ENCODE measurements at regions of chr20 and their contacts with region 1.

Region 1: DNA sequence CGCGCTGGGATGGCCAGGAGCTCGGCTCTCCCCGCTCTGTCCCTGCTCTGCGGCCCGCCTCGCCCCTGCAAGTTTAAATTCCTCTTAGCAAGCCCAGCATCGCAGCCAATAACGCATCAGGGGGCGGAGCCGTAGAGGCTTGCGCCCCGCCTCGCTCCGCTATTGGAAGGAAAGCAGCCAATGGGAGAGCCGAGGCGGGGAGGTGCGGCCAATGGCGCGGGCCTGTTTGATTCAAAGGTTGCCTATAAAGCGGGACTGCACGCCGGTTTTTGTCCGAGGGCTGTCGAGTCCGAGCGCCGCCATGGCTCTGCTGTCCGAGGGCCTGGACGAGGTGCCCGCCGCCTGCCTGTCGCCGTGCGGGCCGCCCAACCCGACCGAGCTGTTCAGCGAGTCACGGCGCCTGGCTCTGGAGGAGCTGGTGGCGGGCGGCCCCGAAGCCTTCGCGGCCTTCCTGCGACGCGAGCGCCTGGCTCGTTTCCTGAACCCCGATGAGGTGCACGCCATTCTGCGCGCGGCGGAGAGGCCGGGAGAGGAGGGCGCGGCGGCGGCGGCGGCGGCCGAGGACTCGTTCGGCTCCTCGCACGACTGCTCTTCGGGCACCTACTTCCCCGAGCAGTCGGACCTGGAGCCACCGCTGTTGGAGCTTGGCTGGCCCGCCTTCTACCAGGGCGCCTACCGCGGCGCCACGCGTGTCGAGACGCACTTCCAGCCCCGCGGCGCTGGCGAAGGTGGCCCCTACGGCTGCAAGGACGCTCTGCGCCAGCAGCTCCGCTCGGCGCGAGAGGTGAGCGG is at the start of gene FAM83D:
- DNase-seq: peak; percentile 81 to 94 (median 85)
- H3K4me3 ChIP-seq: peak within 1 kb of the TSS; percentile 48
- H3K27ac ChIP-seq: no peak within 1 kb of the TSS
- H3K4me1 ChIP-seq: peaks cover 8% of the 10 kb centered on the region
- H3K27me3 ChIP-seq: no peaks in the 10 kb centered on the region
- CTCF ChIP-seq: peak; percentile 43 to 82 (median 57)
- EP300 ChIP-seq: no peak
- POLR2A ChIP-seq: no peak
- total RNA-seq, gene FAM83D: 0.18 to 0.80 (median 0.56) TPM in 6 of 7 donors, not detected in the other

Region 2: GRCh38 chr20:37764333-37764935 is 1161.9 kb before region 1 on chr20:
- intact Hi-C with region 1: loop called in 1 of 4 experiments (anchors 10 kb)
- DNase-seq: no peak
- H3K4me3 ChIP-seq: no peak overlapping the region
- H3K27ac ChIP-seq: no peak overlapping the region
- H3K4me1 ChIP-seq: peaks cover 12% of the 10 kb centered on the region
- H3K27me3 ChIP-seq: no peaks in the 10 kb centered on the region
- CTCF ChIP-seq: no peak
- EP300 ChIP-seq: no peak
- POLR2A ChIP-seq: no peak

Region 3: GRCh38 chr20:39049684-39050554 is 123.6 kb after region 1 on chr20:
- intact Hi-C with region 1: loop called in 2 of 4 experiments (anchors 2 to 5 kb)
- DNase-seq: peak; percentile 63 to 84 (median 73)
- H3K4me3 ChIP-seq: peak overlapping the region; percentile 71
- H3K27ac ChIP-seq: no peak overlapping the region
- H3K4me1 ChIP-seq: no peaks in the 10 kb centered on the region
- H3K27me3 ChIP-seq: no peaks in the 10 kb centered on the region
- CTCF ChIP-seq: peak; percentile 86 to 92 (median 90)
- EP300 ChIP-seq: no peak
- POLR2A ChIP-seq: no peak

Measured in ovary (tissue), 10 donors.